Stomach (tissue), 19 donors: ENCODE measurements at regions of chr20 and their contacts with region 1.

Region 1: DNA sequence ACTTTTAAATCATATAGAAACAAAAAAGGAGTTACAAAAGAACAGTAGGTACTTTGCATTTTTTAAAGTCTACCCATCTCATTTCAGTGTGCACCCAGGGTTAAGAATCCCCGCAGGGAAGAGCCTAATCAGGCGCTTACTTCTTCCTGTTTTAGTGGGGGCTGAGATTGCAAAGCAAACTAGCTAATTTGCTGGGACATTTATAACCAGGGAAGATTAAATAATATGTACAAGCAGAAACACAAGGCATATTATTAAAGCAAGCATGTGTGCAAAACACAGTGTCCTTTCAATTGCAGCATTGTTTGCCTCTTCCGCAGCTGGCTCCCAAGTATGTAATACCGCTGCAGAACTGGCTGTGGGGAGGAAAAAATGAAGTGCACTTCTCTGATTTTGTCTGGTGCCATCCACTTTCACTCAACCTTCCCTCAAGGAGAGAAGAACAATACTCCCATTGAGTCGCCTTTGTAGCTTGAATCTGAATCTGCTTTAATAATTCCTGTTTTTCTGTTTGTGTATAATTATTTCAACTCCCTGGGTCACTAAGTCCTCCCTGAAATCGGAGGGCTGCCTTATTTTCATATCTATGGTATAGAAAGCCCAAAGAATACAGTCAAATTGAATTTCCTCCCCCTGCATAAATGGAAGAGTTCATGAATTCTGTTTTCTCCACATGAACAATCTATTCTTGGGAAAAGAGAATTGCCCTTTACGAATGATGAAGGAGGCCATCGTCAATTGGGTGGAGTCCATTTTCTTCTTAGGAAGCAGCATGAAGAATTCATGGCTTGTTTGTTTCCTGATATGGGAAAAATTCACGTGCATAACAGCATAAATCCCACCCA is 23.3 kb upstream of the BCAS1 start:
- DNase-seq: no peak
- H3K4me3 ChIP-seq: no peak overlapping the region
- H3K27ac ChIP-seq: no peak overlapping the region
- H3K4me1 ChIP-seq: no peaks in the 10 kb centered on the region
- H3K27me3 ChIP-seq: peaks cover 0 to 6% (median 0%) of the 10 kb centered on the region in 3 donors
- CTCF ChIP-seq: no peak
- EP300 ChIP-seq: no peak
- POLR2A ChIP-seq: no peak

Region 2: DNA sequence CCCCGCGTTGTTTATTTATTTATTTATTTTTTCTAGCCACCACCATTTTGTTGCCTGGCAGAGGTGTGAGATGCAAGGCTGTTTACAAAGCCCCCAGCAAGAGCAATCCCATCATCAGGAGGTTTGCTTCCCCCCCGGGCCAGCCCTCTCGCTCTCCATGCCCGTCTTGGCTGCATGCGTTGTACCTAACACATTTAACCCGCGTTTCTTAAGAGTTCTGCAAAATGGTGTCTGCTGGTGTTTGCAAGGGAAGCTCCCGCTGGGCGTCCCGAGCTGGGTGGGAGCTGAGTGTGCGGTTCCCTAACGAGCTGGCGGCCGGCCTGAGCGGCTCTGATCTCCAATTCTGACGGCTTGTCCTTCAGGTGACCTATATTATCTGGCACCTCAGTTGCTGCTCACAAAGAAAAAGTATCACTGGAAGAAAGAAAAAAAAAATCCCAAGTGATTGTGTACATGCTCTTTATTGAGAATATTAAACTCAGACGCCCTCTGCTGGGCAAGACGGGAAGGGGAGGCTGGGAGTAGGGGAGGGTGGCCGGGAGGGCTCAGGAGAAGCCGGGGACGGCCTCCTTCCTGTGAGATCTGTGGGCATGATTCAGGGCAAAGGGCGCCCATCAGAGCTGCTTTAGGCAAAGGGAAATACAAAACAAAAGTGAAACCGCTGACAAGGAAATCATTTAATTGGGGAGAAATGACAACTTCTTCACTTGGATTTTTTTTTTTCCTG is 178.0 kb before region 1 on chr20:
- intact Hi-C with region 1: no loop called
- DNase-seq: peak; percentile 96 to 97
- H3K4me3 ChIP-seq: peak overlapping the region; percentile 54 to 68 (median 58)
- H3K27ac ChIP-seq: peak overlapping the region; percentile 83 to 89 (median 88)
- H3K4me1 ChIP-seq: peaks cover 15 to 39% (median 31%) of the 10 kb centered on the region in 4 donors
- H3K27me3 ChIP-seq: no peaks in the 10 kb centered on the region
- CTCF ChIP-seq: peak in 6 of 7 experiments; percentile 62 to 96 (median 93)
- EP300 ChIP-seq: no peak
- POLR2A ChIP-seq: no peak

Region 3: DNA sequence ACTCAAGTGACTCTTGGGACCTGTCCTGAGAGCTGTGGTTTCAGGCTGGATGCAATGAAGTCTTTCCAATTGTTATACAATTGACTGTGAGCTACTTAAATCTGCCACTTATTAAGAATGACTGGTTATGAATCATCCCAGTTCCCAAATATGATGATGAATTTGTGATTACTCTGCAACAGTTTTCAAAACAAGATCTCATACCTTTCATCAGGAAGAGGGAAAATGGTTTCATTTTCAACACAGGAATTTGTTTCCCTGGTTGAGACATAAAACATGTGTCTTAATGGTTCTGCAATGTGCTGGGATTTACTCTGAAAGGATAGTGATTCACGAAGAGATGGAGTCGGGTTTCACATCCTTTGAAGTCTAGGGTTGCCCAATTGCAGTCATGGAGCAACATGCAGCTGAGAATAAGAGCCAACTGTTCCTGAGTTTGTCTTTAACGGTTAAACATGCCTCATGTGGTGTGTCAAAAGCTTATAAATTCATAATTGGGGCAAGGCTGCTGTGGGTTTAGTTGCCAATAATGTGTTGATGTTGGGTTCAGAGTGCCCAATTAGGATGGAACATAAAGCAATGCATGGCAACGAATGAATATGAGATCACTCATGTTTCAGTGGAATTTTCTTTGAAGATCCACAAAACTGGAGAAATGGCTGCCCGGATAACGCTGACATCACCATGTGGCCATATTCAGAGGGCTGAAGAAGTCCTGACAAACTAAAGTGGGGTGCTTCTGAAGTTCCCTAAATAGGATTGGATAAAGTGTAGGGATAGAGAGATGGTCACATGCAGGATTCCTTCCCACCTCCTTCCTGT is 39.2 kb after region 1 on chr20:
- intact Hi-C with region 1: no loop called
- DNase-seq: peak in 1 of 2 donors; percentile 59
- H3K4me3 ChIP-seq: no peak overlapping the region
- H3K27ac ChIP-seq: peak overlapping the region in 3 of 5 donors; percentile 22 to 46 (median 35)
- H3K4me1 ChIP-seq: peaks cover 0 to 11% (median 0%) of the 10 kb centered on the region in 4 donors
- H3K27me3 ChIP-seq: peaks cover 0 to 3% (median 0%) of the 10 kb centered on the region in 3 donors
- CTCF ChIP-seq: no peak
- EP300 ChIP-seq: no peak
- POLR2A ChIP-seq: no peak

Region 4: GRCh38 chr20:54199721-54200176 is 106.1 kb after region 1 on chr20:
- intact Hi-C with region 1: loop called (anchors 5 kb)
- DNase-seq: peak; percentile 81 to 89
- H3K4me3 ChIP-seq: no peak overlapping the region
- H3K27ac ChIP-seq: no peak overlapping the region
- H3K4me1 ChIP-seq: no peaks in the 10 kb centered on the region
- H3K27me3 ChIP-seq: no peaks in the 10 kb centered on the region
- CTCF ChIP-seq: peak in 5 of 7 experiments; percentile 55 to 91 (median 81)
- EP300 ChIP-seq: no peak
- POLR2A ChIP-seq: no peak

Region 5: GRCh38 chr20:54649511-54649962 is 555.9 kb after region 1 on chr20:
- intact Hi-C with region 1: loop called (anchors 10 kb)
- DNase-seq: peak; percentile 92 to 94
- H3K4me3 ChIP-seq: no peak overlapping the region
- H3K27ac ChIP-seq: no peak overlapping the region
- H3K4me1 ChIP-seq: peaks cover 0 to 15% (median 7%) of the 10 kb centered on the region in 4 donors
- H3K27me3 ChIP-seq: no peaks in the 10 kb centered on the region
- CTCF ChIP-seq: peak in 5 of 7 experiments; percentile 62 to 76 (median 73)
- EP300 ChIP-seq: no peak
- POLR2A ChIP-seq: no peak